ENCODE measurements at regions of chr2 and their contacts with region 1.

Region 1: GRCh38 chr2:121071034-121071504 is 213.9 kb downstream of the TFCP2L1 start:
- DNase-seq: peak; percentile 68
- H3K4me3 Mint-ChIP-seq: no peak overlapping the region
- H3K27ac Mint-ChIP-seq: no peak overlapping the region
- H3K4me1 Mint-ChIP-seq: no peaks in the 10 kb centered on the region
- H3K27me3 Mint-ChIP-seq: peaks cover 2% of the 10 kb centered on the region
- CTCF ChIP-seq: peak; percentile 88

Region 2: GRCh38 chr2:120712180-120712681 is 358.8 kb before region 1 on chr2:
- CTCF ChIA-PET with region 1: interaction called, 541 read pairs
- POLR2A ChIA-PET with region 1: interaction called, 4 read pairs
- intact Hi-C with region 1: no loop called
- DNase-seq: no peak
- H3K4me3 Mint-ChIP-seq: no peak overlapping the region
- H3K27ac Mint-ChIP-seq: no peak overlapping the region
- H3K4me1 Mint-ChIP-seq: peaks cover 5% of the 10 kb centered on the region
- H3K27me3 Mint-ChIP-seq: no peaks in the 10 kb centered on the region
- CTCF ChIP-seq: no peak

Region 3: GRCh38 chr2:120735746-120736170 is 335.3 kb before region 1 on chr2 and contains the start of gene GLI2:
- CTCF ChIA-PET with region 1: interaction called, 40 read pairs
- POLR2A ChIA-PET with region 1: no interaction called
- intact Hi-C with region 1: loop called (anchors 2 kb)
- DNase-seq: peak; percentile 70
- H3K4me3 Mint-ChIP-seq: peak within 1 kb of the TSS; percentile 79
- H3K27ac Mint-ChIP-seq: no peak within 1 kb of the TSS
- H3K4me1 Mint-ChIP-seq: no peaks in the 10 kb centered on the region
- H3K27me3 Mint-ChIP-seq: peaks cover 41% of the 10 kb centered on the region
- CTCF ChIP-seq: peak; percentile 79
- total RNA-seq, gene GLI2: 0.61 and 0.74 TPM in 2 replicates

Region 4: DNA sequence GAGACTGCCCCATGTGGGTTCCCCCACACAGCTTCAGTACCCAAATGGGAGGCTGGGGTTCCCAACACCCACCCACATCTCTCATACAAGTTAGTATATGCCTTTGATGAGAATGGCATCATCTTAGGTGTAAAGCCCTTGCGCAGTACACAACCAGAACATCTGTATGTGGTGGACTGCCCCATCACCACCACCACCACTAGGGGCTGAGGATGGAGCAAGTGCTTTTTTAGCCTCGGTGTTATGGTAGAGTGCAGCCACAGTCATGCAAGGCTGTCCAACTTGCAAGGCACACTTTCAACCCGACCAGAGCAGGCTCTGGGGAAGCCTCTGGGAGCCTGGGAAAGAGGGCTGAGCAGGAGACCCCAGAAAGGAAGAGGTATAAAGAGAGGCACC is 27.2 kb before region 1 on chr2:
- CTCF ChIA-PET with region 1: no interaction called
- POLR2A ChIA-PET with region 1: no interaction called
- intact Hi-C with region 1: no loop called
- DNase-seq: no peak
- H3K4me3 Mint-ChIP-seq: no peak overlapping the region
- H3K27ac Mint-ChIP-seq: no peak overlapping the region
- H3K4me1 Mint-ChIP-seq: peaks cover 5% of the 10 kb centered on the region
- H3K27me3 Mint-ChIP-seq: no peaks in the 10 kb centered on the region
- CTCF ChIP-seq: no peak

Region 5: DNA sequence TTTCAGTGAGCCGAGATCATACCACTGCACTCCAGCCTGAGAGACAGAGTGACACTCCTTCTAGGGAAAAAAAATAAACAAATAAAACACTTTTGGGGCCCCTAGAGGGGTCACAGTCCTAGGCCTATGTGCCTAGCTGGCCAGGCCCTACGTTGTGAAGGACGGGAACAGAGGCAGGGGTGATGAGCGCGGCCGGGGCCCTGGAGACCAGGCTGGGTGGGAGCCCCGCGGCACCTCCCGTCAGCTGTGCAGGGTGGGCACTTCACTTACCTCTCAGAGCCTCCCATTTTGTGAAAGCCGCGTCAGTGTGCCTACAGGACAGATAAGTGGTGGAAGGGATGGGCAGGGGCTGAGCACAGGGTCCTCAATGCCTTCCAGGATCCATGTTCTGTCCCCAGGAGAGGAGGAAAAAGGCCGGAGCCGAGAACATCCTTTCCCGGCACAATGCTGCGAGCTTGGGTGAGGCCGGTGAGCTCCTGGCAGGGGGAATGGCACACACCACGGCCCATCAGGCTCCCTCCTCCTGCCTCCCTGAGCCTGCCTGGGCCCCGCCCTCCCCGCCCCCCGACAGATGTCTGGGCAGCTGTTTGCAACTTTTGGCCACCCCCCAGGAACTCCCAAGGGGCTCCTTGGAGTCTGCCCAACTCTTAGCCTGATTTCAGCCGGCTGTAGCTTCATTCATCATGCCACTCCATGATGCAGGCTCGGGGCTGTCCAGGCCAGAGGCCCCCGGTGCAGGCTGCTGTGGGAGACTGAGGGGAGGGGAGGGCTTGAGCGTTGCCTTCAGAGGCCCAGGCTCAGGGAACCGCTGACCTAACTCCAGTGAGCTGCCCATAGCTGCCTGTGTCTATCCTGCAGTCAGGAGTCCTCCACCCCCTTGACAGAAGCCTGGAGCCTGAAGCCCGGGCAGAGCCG is 17.4 kb after region 1 on chr2:
- CTCF ChIA-PET with region 1: interaction called, 62 read pairs
- POLR2A ChIA-PET with region 1: no interaction called
- intact Hi-C with region 1: no loop called
- DNase-seq: no peak
- H3K4me3 Mint-ChIP-seq: no peak overlapping the region
- H3K27ac Mint-ChIP-seq: no peak overlapping the region
- H3K4me1 Mint-ChIP-seq: peaks cover under 1% of the 10 kb centered on the region
- H3K27me3 Mint-ChIP-seq: no peaks in the 10 kb centered on the region
- CTCF ChIP-seq: no peak

Measured in MCF 10A (cell line).